ENCODE measurements at regions of chr2 and their contacts with region 1.

Region 1: DNA sequence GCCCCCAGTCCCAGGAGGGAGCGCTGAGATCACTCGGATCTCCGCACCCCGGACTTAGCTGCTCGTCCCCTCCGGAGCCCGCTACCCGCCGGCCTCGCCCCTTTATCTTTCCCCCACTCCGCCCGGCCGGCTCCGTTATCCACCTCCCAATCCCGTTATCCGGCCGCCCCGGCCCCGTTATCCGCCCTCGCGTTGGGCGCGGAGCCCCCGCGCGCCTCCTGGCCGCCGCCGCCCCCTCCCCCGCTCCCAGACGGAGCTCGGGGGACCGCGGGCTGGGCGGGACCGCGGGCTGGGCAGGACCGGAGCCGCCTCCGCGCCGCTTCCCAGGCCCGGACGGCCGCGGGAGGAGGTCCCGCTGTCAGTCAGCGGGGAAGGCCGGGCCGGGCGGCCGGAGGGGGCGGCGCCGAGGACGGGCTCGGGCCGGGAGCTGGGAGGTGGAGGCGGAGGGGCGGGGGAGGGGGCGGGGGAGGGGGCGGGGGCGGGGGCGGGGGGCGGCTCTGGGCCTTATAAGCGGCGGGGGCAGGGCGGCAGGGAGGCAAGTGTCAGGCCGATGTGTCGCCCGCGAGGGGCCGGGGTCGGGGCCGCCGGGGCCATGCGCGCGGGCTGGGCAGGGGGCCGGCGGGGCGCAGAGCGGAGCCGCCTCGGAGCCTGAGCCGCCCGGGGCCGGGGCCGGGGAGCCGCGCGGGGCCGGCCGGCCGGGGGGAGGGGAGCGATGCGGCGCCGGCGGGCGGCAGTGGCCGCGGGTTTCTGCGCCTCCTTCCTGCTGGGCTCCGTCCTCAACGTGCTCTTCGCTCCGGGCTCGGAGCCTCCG is at the start of gene PKDCC:
- DNase-seq: peak; percentile 100
- H3K4me3 ChIP-seq: peak within 1 kb of the TSS; percentile 81 to 85
- H3K27ac ChIP-seq: peak within 1 kb of the TSS; percentile 5 to 100; a peak in 3 of 4 replicates
- H3K4me1 ChIP-seq: peaks cover 0 to 67% of the 10 kb centered on the region in 2 experiments; a peak in 2 of 4 replicates
- H3K27me3 ChIP-seq: 0 out of 2 replicates have a peak, but pooled peaks cover 8% of the 10 kb centered on the region
- CTCF ChIP-seq: no peak
- EP300 ChIP-seq: no peak
- RAD21 ChIP-seq: no peak
- polyA plus RNA-seq, gene PKDCC: 16.0 and 19.5 TPM in 2 replicates

Region 2: GRCh38 chr2:41879235-41879916 is 168.3 kb before region 1 on chr2:
- CTCF ChIA-PET with region 1: interaction called, 193 read pairs
- POLR2A ChIA-PET with region 1: interaction called, 26 read pairs
- DNase-seq: peak; percentile 50
- H3K4me3 ChIP-seq: no peak overlapping the region
- H3K27ac ChIP-seq: peak overlapping the region in 1 of 2 experiments; percentile 64; a peak in 2 of 4 replicates
- H3K4me1 ChIP-seq: peaks cover 0 to 24% of the 10 kb centered on the region in 2 experiments; a peak in 1 of 4 replicates
- H3K27me3 ChIP-seq: peaks cover 14% of the 10 kb centered on the region; the same call in 1 of the 2 replicates
- CTCF ChIP-seq: no peak
- EP300 ChIP-seq: no peak; a peak in 1 of 4 replicates
- RAD21 ChIP-seq: no peak

Region 3: GRCh38 chr2:41933585-41934320 is 113.9 kb before region 1 on chr2:
- CTCF ChIA-PET with region 1: interaction called, 7 read pairs
- POLR2A ChIA-PET with region 1: interaction called, 13 read pairs
- DNase-seq: no peak
- H3K4me3 ChIP-seq: no peak overlapping the region
- H3K27ac ChIP-seq: no peak overlapping the region
- H3K4me1 ChIP-seq: peaks cover 13 to 50% of the 10 kb centered on the region in 2 experiments; a peak in 3 of 4 replicates
- H3K27me3 ChIP-seq: no peaks in the 10 kb centered on the region
- CTCF ChIP-seq: no peak
- EP300 ChIP-seq: no peak
- RAD21 ChIP-seq: no peak

Region 4: GRCh38 chr2:41955316-41956043 is 92.2 kb before region 1 on chr2:
- CTCF ChIA-PET with region 1: interaction called, 16 read pairs
- POLR2A ChIA-PET with region 1: interaction called, 93 read pairs
- DNase-seq: no peak
- H3K4me3 ChIP-seq: peak overlapping the region in 1 of 2 experiments; percentile 35; a peak in 2 of 4 replicates
- H3K27ac ChIP-seq: peak overlapping the region; percentile 36 to 99; a peak in 3 of 4 replicates
- H3K4me1 ChIP-seq: peaks cover 0 to 64% of the 10 kb centered on the region in 2 experiments; a peak in 2 of 4 replicates
- H3K27me3 ChIP-seq: no peaks in the 10 kb centered on the region; the same call in 1 of the 2 replicates
- CTCF ChIP-seq: no peak
- EP300 ChIP-seq: peak in 1 of 2 experiments; percentile 63; a peak in 2 of 4 replicates
- RAD21 ChIP-seq: peak; percentile 15; the same call in 1 of the 2 replicates

Region 5: GRCh38 chr2:41973871-41974270 is 73.8 kb before region 1 on chr2:
- CTCF ChIA-PET with region 1: no interaction called
- POLR2A ChIA-PET with region 1: no interaction called
- DNase-seq: no peak
- H3K4me3 ChIP-seq: no peak overlapping the region
- H3K27ac ChIP-seq: no peak overlapping the region
- H3K4me1 ChIP-seq: no peaks in the 10 kb centered on the region
- H3K27me3 ChIP-seq: no peaks in the 10 kb centered on the region
- CTCF ChIP-seq: no peak
- EP300 ChIP-seq: no peak
- RAD21 ChIP-seq: no peak

Region 6: GRCh38 chr2:42021464-42021863 is 26.2 kb before region 1 on chr2:
- CTCF ChIA-PET with region 1: interaction called, 18 read pairs
- POLR2A ChIA-PET with region 1: interaction called, 26 read pairs
- DNase-seq: peak; percentile 65
- H3K4me3 ChIP-seq: peak overlapping the region in 1 of 2 experiments; percentile 22; a peak in 2 of 4 replicates
- H3K27ac ChIP-seq: peak overlapping the region; percentile 59 to 80; a peak in 3 of 4 replicates
- H3K4me1 ChIP-seq: peaks cover 14 to 28% of the 10 kb centered on the region in 2 experiments; a peak in 3 of 4 replicates
- H3K27me3 ChIP-seq: no peaks in the 10 kb centered on the region
- CTCF ChIP-seq: no peak
- EP300 ChIP-seq: peak in 1 of 2 experiments; percentile 56; a peak in 1 of 4 replicates
- RAD21 ChIP-seq: no peak

Region 7: GRCh38 chr2:42072349-42073118 is 24.8 kb after region 1 on chr2:
- CTCF ChIA-PET with region 1: interaction called, 48 read pairs
- POLR2A ChIA-PET with region 1: interaction called, 36 read pairs
- DNase-seq: peak; percentile 80
- H3K4me3 ChIP-seq: no peak overlapping the region
- H3K27ac ChIP-seq: peak overlapping the region in 1 of 2 experiments; percentile 76; a peak in 2 of 4 replicates
- H3K4me1 ChIP-seq: peaks cover 0 to 49% of the 10 kb centered on the region in 2 experiments; a peak in 1 of 4 replicates
- H3K27me3 ChIP-seq: peaks cover 17% of the 10 kb centered on the region
- CTCF ChIP-seq: no peak
- EP300 ChIP-seq: peak in 1 of 2 experiments; percentile 5; a peak in 2 of 4 replicates
- RAD21 ChIP-seq: peak; percentile 39